B cell (primary cell): ENCODE measurements at regions of chr1 and their contacts with region 1.

Region 1: DNA sequence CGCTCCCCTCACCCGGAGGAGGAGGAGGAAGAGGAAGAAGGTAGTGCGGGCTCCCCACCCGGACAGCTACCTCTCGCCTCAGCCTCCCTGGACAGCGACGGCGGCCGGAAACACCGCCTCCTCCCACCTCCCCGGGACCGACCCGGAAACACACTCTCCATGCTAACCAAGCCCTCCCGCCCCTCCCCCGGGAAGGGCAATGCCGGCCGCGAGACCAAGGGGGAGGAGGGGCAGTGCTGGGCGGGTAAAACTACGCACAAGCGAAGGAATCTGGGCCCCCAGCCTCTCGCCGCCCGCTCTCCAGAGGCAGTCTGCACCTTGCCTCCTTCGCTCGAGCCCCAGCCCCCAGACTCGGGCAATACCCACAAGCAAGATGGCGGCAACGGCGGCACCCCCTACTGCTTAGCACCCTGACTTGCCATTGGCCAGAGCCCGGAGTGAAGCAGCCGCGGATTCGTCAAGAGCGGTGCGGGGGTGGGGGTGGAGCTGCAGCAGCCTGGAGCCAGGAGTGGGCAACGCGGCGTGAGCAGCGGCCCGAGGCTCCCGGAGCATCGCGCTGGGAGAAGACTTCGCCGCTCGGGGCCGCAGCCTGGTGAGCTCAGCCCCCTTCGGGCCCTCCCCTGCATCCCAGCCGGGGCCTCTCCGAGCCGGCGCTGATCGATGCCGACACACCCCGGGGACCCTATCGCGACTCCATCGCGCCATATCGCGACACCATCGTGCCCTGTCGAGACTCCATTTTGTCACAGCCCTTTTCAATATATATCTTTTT is at the starts of genes KIAA0319L and NCDN:
- DNase-seq: peak; percentile 96
- ATAC-seq: peak; percentile 92
- H3K4me3 ChIP-seq: peak within 1 kb of the TSS; percentile 82 to 94 (median 90)
- H3K4me3 Mint-ChIP-seq: peak within 1 kb of the TSS; percentile 98
- H3K27ac ChIP-seq: peak within 1 kb of the TSS; percentile 68 to 82
- H3K27ac Mint-ChIP-seq: peak within 1 kb of the TSS; percentile 99
- H3K4me1 ChIP-seq: peaks cover 15 to 26% of the 10 kb centered on the region in 2 donors
- H3K4me1 Mint-ChIP-seq: peaks cover 41% of the 10 kb centered on the region
- H3K27me3 ChIP-seq: no peaks in the 10 kb centered on the region
- H3K27me3 Mint-ChIP-seq: no peaks in the 10 kb centered on the region
- CTCF ChIP-seq: no peak
- total RNA-seq, gene KIAA0319L: 78.1 and 89.9 TPM in 2 replicates
- total RNA-seq, gene NCDN: 19.8 and 22.6 TPM in 2 replicates

Region 2: GRCh38 chr1:35030756-35031446 is 526.6 kb before region 1 on chr1:
- CTCF ChIA-PET with region 1: no interaction called
- POLR2A ChIA-PET with region 1: no interaction called
- intact Hi-C with region 1: loop called (anchors 5 kb)
- DNase-seq: peak; percentile 66
- ATAC-seq: peak; percentile 22
- H3K4me3 ChIP-seq: peak overlapping the region; percentile 85 to 98 (median 96)
- H3K4me3 Mint-ChIP-seq: peak overlapping the region; percentile 99
- H3K27ac ChIP-seq: peak overlapping the region; percentile 66 to 87
- H3K27ac Mint-ChIP-seq: peak overlapping the region; percentile 95
- H3K4me1 ChIP-seq: peaks cover 19 to 23% of the 10 kb centered on the region in 2 donors
- H3K4me1 Mint-ChIP-seq: peaks cover 42% of the 10 kb centered on the region
- H3K27me3 ChIP-seq: no peaks in the 10 kb centered on the region
- H3K27me3 Mint-ChIP-seq: no peaks in the 10 kb centered on the region
- CTCF ChIP-seq: no peak

Region 3: GRCh38 chr1:35577071-35577998 is 19.9 kb after region 1 on chr1:
- CTCF ChIA-PET with region 1: interaction called, 5 read pairs
- POLR2A ChIA-PET with region 1: no interaction called
- intact Hi-C with region 1: loop called (anchors 2 kb)
- DNase-seq: peak; percentile 81
- ATAC-seq: peak; percentile 85
- H3K4me3 ChIP-seq: peak overlapping the region; percentile 60 to 75 (median 71)
- H3K4me3 Mint-ChIP-seq: peak overlapping the region; percentile 91
- H3K27ac ChIP-seq: peak overlapping the region; percentile 43 to 62
- H3K27ac Mint-ChIP-seq: peak overlapping the region; percentile 90
- H3K4me1 ChIP-seq: peaks cover 21 to 39% of the 10 kb centered on the region in 2 donors
- H3K4me1 Mint-ChIP-seq: peaks cover 38% of the 10 kb centered on the region
- H3K27me3 ChIP-seq: peaks cover 0 to 21% (median 6%) of the 10 kb centered on the region in 4 experiments
- H3K27me3 Mint-ChIP-seq: peaks cover 14% of the 10 kb centered on the region
- CTCF ChIP-seq: no peak

Region 4: GRCh38 chr1:35715568-35716002 is 158.1 kb after region 1 on chr1:
- CTCF ChIA-PET with region 1: interaction called, 6 read pairs
- POLR2A ChIA-PET with region 1: interaction called, 17 read pairs
- intact Hi-C with region 1: no loop called
- DNase-seq: peak; percentile 79
- ATAC-seq: peak; percentile 59
- H3K4me3 ChIP-seq: no peak overlapping the region
- H3K4me3 Mint-ChIP-seq: peak overlapping the region; percentile 51
- H3K27ac ChIP-seq: no peak overlapping the region
- H3K27ac Mint-ChIP-seq: peak overlapping the region; percentile 54
- H3K4me1 ChIP-seq: peaks cover 10 to 20% of the 10 kb centered on the region in 2 donors
- H3K4me1 Mint-ChIP-seq: peaks cover 29% of the 10 kb centered on the region
- H3K27me3 ChIP-seq: peaks cover 0 to 3% (median 0%) of the 10 kb centered on the region in 4 experiments
- H3K27me3 Mint-ChIP-seq: no peaks in the 10 kb centered on the region
- CTCF ChIP-seq: peak; percentile 98